K562 (cell line): ENCODE measurements at regions of chr12 and their contacts with region 1.

Region 1: GRCh38 chr12:15522565-15523187 is 200.4 kb downstream of the PTPRO start:
- DNase-seq: peak in 1 of 4 experiments; percentile 9
- ATAC-seq: no peak
- H3K4me3 ChIP-seq: no peak overlapping the region
- H3K27ac ChIP-seq: no peak overlapping the region
- H3K4me1 ChIP-seq: no peaks in the 10 kb centered on the region
- H3K27me3 ChIP-seq: no peaks in the 10 kb centered on the region
- CTCF ChIP-seq: peak in 2 of 3 experiments; percentile 22 to 51; a peak in 2 of 6 replicates
- EP300 ChIP-seq: no peak
- POLR2A ChIP-seq: no peak
- RAD21 ChIP-seq: peak; percentile 49 to 73; a peak in 3 of 4 replicates

Region 2: GRCh38 chr12:14723763-14724162 is 798.9 kb before region 1 on chr12:
- CTCF ChIA-PET with region 1: no interaction called
- POLR2A ChIA-PET with region 1: no interaction called
- in situ Hi-C with region 1: no loop called
- intact Hi-C with region 1: loop called (anchors 10 kb)
- DNase-seq: peak; percentile 5 to 33 (median 9)
- ATAC-seq: peak; percentile 67; the same call in 2 of the 3 replicates
- H3K4me3 ChIP-seq: no peak overlapping the region
- H3K27ac ChIP-seq: no peak overlapping the region
- H3K4me1 ChIP-seq: no peaks in the 10 kb centered on the region
- H3K27me3 ChIP-seq: no peaks in the 10 kb centered on the region
- CTCF ChIP-seq: peak; percentile 41 to 53 (median 52)
- EP300 ChIP-seq: no peak
- POLR2A ChIP-seq: no peak
- RAD21 ChIP-seq: peak; percentile 24 to 57; a peak in 2 of 4 replicates